ENCODE measurements at regions of chr13 and their contacts with region 1.

Region 1: GRCh38 chr13:108155185-108156106 is 59.9 kb downstream of the LIG4 start:
- DNase-seq: peak; percentile 39
- CTCF ChIP-seq: peak; percentile 82

Region 2: DNA sequence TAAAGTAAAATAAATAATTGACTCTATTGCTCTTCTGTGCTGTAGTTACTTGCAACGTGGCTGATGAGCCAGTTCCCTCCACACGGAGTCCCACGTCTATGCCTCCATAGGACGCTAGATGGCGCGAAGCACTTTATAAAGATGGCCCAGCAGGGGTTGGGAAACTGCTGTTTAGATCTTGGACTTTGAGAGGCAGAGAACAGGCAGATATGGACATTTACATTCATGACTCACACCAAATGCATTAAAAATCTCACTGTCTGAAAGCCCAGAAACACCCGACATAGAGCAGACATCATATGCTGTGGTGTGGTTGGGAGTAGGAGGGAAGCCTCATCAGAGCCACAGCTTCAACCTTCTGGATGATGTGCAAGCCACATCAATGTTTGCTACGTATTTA is 944.4 kb before region 1 on chr13:
- in situ Hi-C with region 1: loop called (anchors 25 kb)
- DNase-seq: peak; percentile 42
- CTCF ChIP-seq: peak; percentile 94

Region 3: DNA sequence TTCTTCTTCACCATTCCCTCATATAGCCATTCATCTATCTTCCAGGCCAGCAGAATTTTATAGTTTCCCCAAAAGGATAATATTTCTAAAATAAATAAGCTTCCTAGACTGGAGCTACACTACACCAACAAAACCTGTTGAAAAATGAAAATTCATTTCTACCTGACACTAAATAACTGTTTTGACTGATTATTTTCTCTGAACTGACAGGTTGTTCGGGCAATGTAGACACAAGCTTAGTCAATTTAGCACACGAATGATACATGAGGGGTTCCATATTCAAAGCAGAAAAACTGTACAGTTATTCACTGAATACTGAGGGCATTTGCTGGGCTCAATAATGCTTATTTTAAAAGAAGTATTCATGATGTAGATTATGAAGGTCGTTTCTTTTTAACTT is 529.8 kb before region 1 on chr13:
- in situ Hi-C with region 1: no loop called
- DNase-seq: no peak
- CTCF ChIP-seq: no peak

Measured in GM13977 (cell line).